ENCODE measurements at regions of chr13 and their contacts with region 1.

Region 1: DNA sequence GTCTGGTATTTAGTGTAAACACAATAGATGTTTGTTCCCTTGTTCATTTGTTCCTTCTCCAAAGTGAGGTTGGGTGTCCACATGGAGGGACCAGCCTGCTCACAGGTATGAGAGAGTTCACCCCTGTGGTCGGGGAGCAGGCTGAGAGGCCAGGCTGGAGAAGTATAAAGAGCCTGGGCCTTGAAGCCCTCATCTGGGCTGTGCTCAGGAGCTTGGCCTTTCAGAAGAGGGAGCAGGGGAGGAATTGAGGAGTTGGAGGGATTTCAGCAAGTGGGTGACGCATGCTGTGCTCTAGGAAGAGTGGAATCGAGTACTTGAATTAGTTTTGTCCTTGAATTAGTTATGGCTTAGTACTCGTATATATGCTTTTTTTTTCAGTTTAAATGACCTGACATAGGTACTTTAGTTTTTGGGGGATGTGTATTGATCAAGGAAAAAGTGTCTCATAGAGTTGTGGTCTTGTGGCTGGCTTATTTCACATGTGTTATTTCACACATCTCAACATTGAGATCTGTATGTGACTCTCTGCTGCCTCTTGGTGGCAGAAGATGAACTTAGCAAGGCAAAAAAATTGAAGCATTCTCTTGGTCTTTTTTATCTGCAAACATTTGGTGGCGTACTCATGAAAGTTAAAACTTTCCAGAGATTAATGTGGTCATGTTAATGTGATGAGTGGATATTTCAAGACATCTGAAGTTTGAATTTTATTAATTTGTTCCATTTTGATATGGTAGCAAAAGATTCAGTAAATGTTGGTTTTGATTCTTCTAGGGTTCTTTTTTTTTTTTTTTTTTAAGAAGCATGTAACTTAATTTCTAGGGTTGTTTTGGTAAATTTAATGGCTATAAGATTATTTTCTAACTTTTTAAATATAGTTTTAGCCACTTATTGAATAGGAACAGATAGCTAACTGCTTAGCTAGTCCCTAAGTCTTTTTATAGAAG is 54.3 kb downstream of the SLAIN1 start:
- DNase-seq: peak in 1 of 2 donors; percentile 80
- ATAC-seq: peak; percentile 82 to 94 (median 93)
- H3K4me3 ChIP-seq: no peak overlapping the region
- H3K4me3 Mint-ChIP-seq: no peak overlapping the region
- H3K27ac ChIP-seq: no peak overlapping the region
- H3K27ac Mint-ChIP-seq: peak overlapping the region in 1 of 2 donors; percentile 78
- H3K4me1 ChIP-seq: peaks cover 3% of the 10 kb centered on the region
- H3K4me1 Mint-ChIP-seq: peaks cover 8 to 9% of the 10 kb centered on the region in 2 donors
- H3K27me3 ChIP-seq: no peaks in the 10 kb centered on the region
- H3K27me3 Mint-ChIP-seq: no peaks in the 10 kb centered on the region
- CTCF ChIP-seq: peak; percentile 79

Region 2: GRCh38 chr13:77477299-77477848 is 274.4 kb before region 1 on chr13:
- intact Hi-C with region 1: loop called (anchors 5 kb)
- DNase-seq: no peak
- ATAC-seq: no peak
- H3K4me3 ChIP-seq: no peak overlapping the region
- H3K4me3 Mint-ChIP-seq: no peak overlapping the region
- H3K27ac ChIP-seq: no peak overlapping the region
- H3K27ac Mint-ChIP-seq: no peak overlapping the region
- H3K4me1 ChIP-seq: no peaks in the 10 kb centered on the region
- H3K4me1 Mint-ChIP-seq: peaks cover 6 to 8% of the 10 kb centered on the region in 2 donors
- H3K27me3 ChIP-seq: no peaks in the 10 kb centered on the region
- H3K27me3 Mint-ChIP-seq: peaks cover 0 to 11% of the 10 kb centered on the region in 2 donors
- CTCF ChIP-seq: no peak

Region 3: DNA sequence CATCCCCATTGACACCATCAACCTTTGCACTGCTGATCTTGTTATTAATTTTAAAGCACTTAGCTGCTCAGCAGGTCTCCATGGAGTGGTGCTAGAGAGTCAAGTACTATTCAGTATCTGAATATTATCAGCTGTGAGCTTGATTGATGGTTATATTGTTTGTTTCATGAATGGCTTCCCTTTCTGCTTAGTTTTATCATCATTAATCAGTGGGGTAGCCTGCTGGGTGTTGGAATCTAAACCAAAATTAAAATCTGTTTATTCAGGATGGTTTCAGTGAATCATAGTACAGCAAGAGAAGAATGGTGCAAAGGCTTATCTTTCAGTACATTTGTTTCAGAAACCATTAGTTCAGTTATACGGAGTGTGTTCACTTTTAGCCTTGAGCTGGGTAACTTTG is 258.8 kb before region 1 on chr13:
- intact Hi-C with region 1: loop called (anchors 5 kb)
- DNase-seq: peak in 1 of 2 donors; percentile 37
- ATAC-seq: peak in 1 of 3 donors; percentile 37
- H3K4me3 ChIP-seq: no peak overlapping the region
- H3K4me3 Mint-ChIP-seq: no peak overlapping the region
- H3K27ac ChIP-seq: no peak overlapping the region
- H3K27ac Mint-ChIP-seq: no peak overlapping the region
- H3K4me1 ChIP-seq: no peaks in the 10 kb centered on the region
- H3K4me1 Mint-ChIP-seq: no peaks in the 10 kb centered on the region
- H3K27me3 ChIP-seq: no peaks in the 10 kb centered on the region
- H3K27me3 Mint-ChIP-seq: peaks cover 7 to 38% of the 10 kb centered on the region in 2 donors
- CTCF ChIP-seq: no peak

Region 4: GRCh38 chr13:77595166-77595810 is 156.5 kb before region 1 on chr13:
- intact Hi-C with region 1: loop called (anchors 2 kb)
- DNase-seq: no peak
- ATAC-seq: no peak
- H3K4me3 ChIP-seq: no peak overlapping the region
- H3K4me3 Mint-ChIP-seq: no peak overlapping the region
- H3K27ac ChIP-seq: no peak overlapping the region
- H3K27ac Mint-ChIP-seq: no peak overlapping the region
- H3K4me1 ChIP-seq: no peaks in the 10 kb centered on the region
- H3K4me1 Mint-ChIP-seq: no peaks in the 10 kb centered on the region
- H3K27me3 ChIP-seq: peaks cover 2% of the 10 kb centered on the region
- H3K27me3 Mint-ChIP-seq: peaks cover 11 to 16% of the 10 kb centered on the region in 2 donors
- CTCF ChIP-seq: no peak

Region 5: GRCh38 chr13:77697217-77698103 is 54.3 kb before region 1 on chr13 and contains the start of gene SLAIN1:
- intact Hi-C with region 1: loop called (anchors 2 kb)
- DNase-seq: peak; percentile 72 to 93
- ATAC-seq: peak; percentile 79 to 88 (median 81)
- H3K4me3 ChIP-seq: peak within 1 kb of the TSS; percentile 97
- H3K4me3 Mint-ChIP-seq: peak within 1 kb of the TSS; percentile 99
- H3K27ac ChIP-seq: peak within 1 kb of the TSS; percentile 75
- H3K27ac Mint-ChIP-seq: peak within 1 kb of the TSS; percentile 87 to 92
- H3K4me1 ChIP-seq: peaks cover 4% of the 10 kb centered on the region
- H3K4me1 Mint-ChIP-seq: peaks cover 26 to 29% of the 10 kb centered on the region in 2 donors
- H3K27me3 ChIP-seq: no peaks in the 10 kb centered on the region
- H3K27me3 Mint-ChIP-seq: peaks cover 4 to 7% of the 10 kb centered on the region in 2 donors
- CTCF ChIP-seq: no peak
- total RNA-seq, gene SLAIN1: 14.9 to 29.0 (median 25.7) TPM

Region 6: GRCh38 chr13:78540058-78540457 is 788.3 kb after region 1 on chr13:
- intact Hi-C with region 1: no loop called
- DNase-seq: no peak
- ATAC-seq: no peak
- H3K4me3 ChIP-seq: no peak overlapping the region
- H3K4me3 Mint-ChIP-seq: no peak overlapping the region
- H3K27ac ChIP-seq: no peak overlapping the region
- H3K27ac Mint-ChIP-seq: no peak overlapping the region
- H3K4me1 ChIP-seq: no peaks in the 10 kb centered on the region
- H3K4me1 Mint-ChIP-seq: no peaks in the 10 kb centered on the region
- H3K27me3 ChIP-seq: peaks cover 2% of the 10 kb centered on the region
- H3K27me3 Mint-ChIP-seq: peaks cover 7 to 12% of the 10 kb centered on the region in 2 donors
- CTCF ChIP-seq: no peak